MCF 10A (cell line): ENCODE measurements at regions of chr10 and their contacts with region 1.

Region 1: DNA sequence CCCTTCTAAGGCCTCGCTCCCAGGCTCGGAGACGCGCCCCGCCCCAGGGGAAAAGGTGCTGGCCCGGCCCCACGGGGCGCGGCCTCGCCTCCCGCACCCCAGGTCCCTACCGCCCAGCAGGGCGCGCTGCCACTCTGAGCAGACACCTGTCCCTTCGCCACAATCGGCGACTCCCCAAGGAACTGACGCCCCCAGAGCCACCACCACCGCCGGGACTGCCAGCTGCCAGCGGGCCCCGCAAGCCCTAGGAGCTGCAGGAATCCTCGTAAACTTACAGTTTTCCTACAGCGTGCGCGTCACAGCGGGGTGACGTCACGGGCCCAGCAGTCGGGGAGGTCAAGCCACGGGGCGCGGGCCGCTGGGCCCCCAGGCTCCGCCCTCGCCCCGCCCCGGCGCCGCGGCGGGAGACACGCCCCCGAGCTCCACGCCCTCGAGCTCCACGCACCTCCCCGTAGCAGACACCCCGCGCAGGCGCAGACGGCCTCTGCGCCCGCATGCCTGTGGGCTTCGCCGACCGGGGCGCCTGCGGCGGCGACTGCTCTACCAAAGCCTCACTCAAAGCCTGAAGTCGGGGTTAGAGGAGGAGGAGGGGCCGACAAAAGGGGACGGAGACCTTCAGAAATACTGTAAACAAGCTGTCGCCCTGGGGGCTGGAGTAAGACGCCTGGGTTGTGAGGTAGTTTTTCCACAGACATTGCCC is at the start of gene ZNF438:
- DNase-seq: peak; percentile 90
- H3K4me3 Mint-ChIP-seq: peak within 1 kb of the TSS; percentile 78
- H3K27ac Mint-ChIP-seq: peak within 1 kb of the TSS; percentile 99
- H3K4me1 Mint-ChIP-seq: peaks cover 34% of the 10 kb centered on the region
- H3K27me3 Mint-ChIP-seq: no peaks in the 10 kb centered on the region
- CTCF ChIP-seq: peak; percentile 59
- total RNA-seq, gene ZNF438: 6.8 and 8.4 TPM in 2 replicates

Region 2: GRCh38 chr10:30783939-30784500 is 247.7 kb before region 1 on chr10:
- CTCF ChIA-PET with region 1: interaction called, 3 read pairs
- POLR2A ChIA-PET with region 1: no interaction called
- intact Hi-C with region 1: loop called (anchors 5 kb)
- DNase-seq: peak; percentile 54
- H3K4me3 Mint-ChIP-seq: no peak overlapping the region
- H3K27ac Mint-ChIP-seq: no peak overlapping the region
- H3K4me1 Mint-ChIP-seq: peaks cover 24% of the 10 kb centered on the region
- H3K27me3 Mint-ChIP-seq: no peaks in the 10 kb centered on the region
- CTCF ChIP-seq: peak; percentile 73

Region 3: DNA sequence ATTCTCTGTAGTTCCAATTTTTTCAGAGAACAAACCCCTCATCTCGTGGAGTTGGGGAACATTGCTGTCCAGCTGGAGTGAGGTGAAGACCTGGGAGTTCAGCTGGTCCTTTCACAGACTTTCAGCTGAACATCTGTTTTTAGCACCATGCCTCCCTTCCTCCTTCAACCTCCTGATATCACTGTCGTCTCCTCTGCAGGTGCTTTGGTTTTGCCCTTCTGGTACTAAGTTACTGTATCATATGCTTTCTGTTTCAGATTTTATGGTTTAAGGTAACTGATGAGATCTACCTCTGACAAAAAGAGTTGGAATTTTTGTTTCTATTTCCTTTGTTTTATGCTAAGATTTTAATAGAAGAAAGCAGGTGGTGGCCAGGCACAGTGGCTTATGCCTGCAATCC is 103.0 kb before region 1 on chr10:
- CTCF ChIA-PET with region 1: no interaction called
- POLR2A ChIA-PET with region 1: no interaction called
- intact Hi-C with region 1: no loop called
- DNase-seq: no peak
- H3K4me3 Mint-ChIP-seq: no peak overlapping the region
- H3K27ac Mint-ChIP-seq: no peak overlapping the region
- H3K4me1 Mint-ChIP-seq: no peaks in the 10 kb centered on the region
- H3K27me3 Mint-ChIP-seq: no peaks in the 10 kb centered on the region
- CTCF ChIP-seq: no peak

Region 4: DNA sequence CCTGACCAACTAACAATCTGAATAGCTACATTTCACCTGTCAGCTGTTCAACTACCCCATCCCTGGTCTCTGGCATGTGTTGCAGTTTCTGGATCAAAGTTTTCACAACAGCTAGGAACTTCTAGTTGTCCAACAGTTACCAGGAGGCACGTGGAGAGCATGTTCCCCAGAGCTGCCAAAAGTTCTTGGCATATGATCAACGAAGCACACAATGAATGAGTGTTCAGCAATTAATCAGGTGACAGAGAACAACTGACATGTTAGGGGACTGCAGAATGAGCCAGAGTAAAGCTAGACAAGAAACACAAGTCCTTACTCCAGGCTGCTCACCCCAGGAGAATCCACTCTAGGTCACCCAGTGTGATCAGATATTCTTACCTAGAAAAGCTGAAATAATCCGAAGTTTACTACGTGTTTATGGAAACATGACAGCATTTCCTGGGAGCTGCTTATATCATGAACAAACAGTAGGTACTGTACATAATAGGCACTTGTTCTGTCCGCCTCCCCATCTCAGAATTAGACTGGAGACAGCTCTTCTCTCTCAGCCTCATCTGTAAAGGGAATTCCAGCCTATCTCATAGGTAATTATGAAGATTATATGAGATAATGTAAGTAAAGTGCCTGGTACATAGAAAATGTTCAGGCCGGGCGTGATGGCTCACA is 50.6 kb before region 1 on chr10:
- CTCF ChIA-PET with region 1: interaction called, 4 read pairs
- POLR2A ChIA-PET with region 1: interaction called, 38 read pairs
- intact Hi-C with region 1: loop called (anchors 5 kb)
- DNase-seq: peak; percentile 89
- H3K4me3 Mint-ChIP-seq: no peak overlapping the region
- H3K27ac Mint-ChIP-seq: peak overlapping the region; percentile 86
- H3K4me1 Mint-ChIP-seq: peaks cover 23% of the 10 kb centered on the region
- H3K27me3 Mint-ChIP-seq: no peaks in the 10 kb centered on the region
- CTCF ChIP-seq: no peak

Region 5: GRCh38 chr10:30986053-30986555 is 45.6 kb before region 1 on chr10:
- CTCF ChIA-PET with region 1: interaction called, 4 read pairs
- POLR2A ChIA-PET with region 1: interaction called, 38 read pairs
- intact Hi-C with region 1: loop called (anchors 5 kb)
- DNase-seq: peak; percentile 72
- H3K4me3 Mint-ChIP-seq: peak overlapping the region; percentile 45
- H3K27ac Mint-ChIP-seq: peak overlapping the region; percentile 78
- H3K4me1 Mint-ChIP-seq: peaks cover 10% of the 10 kb centered on the region
- H3K27me3 Mint-ChIP-seq: no peaks in the 10 kb centered on the region
- CTCF ChIP-seq: no peak

Region 6: GRCh38 chr10:31318854-31319601 is 287.3 kb after region 1 on chr10 and contains the start of gene ZEB1:
- CTCF ChIA-PET with region 1: interaction called, 3 read pairs
- POLR2A ChIA-PET with region 1: interaction called, 20 read pairs
- intact Hi-C with region 1: loop called (anchors 1 kb)
- DNase-seq: peak; percentile 91
- H3K4me3 Mint-ChIP-seq: peak within 1 kb of the TSS; percentile 86
- H3K27ac Mint-ChIP-seq: peak within 1 kb of the TSS; percentile 88
- H3K4me1 Mint-ChIP-seq: peaks cover 27% of the 10 kb centered on the region
- H3K27me3 Mint-ChIP-seq: no peaks in the 10 kb centered on the region
- CTCF ChIP-seq: peak; percentile 43
- total RNA-seq, gene ZEB1: 15.1 and 20.6 TPM in 2 replicates

Region 7: GRCh38 chr10:31490858-31491504 is 459.3 kb after region 1 on chr10:
- CTCF ChIA-PET with region 1: interaction called, 4 read pairs
- POLR2A ChIA-PET with region 1: no interaction called
- intact Hi-C with region 1: loop called (anchors 1 kb)
- DNase-seq: peak; percentile 57
- H3K4me3 Mint-ChIP-seq: no peak overlapping the region
- H3K27ac Mint-ChIP-seq: no peak overlapping the region
- H3K4me1 Mint-ChIP-seq: peaks cover 7% of the 10 kb centered on the region
- H3K27me3 Mint-ChIP-seq: no peaks in the 10 kb centered on the region
- CTCF ChIP-seq: peak; percentile 58